Activated B cell treated with CpG ODN at 0.5 μM for 24 hours (primary cell): ENCODE measurements at regions of chr2 and their contacts with region 1.

Region 1: GRCh38 chr2:207166039-207166348 is 246 bp upstream of the KLF7 start:
- DNase-seq: peak; percentile 88
- ATAC-seq: peak; percentile 89
- H3K4me3 Mint-ChIP-seq: peak overlapping the region; percentile 95
- H3K27ac Mint-ChIP-seq: peak overlapping the region; percentile 95
- H3K4me1 Mint-ChIP-seq: peaks cover 63% of the 10 kb centered on the region
- H3K27me3 Mint-ChIP-seq: no peaks in the 10 kb centered on the region
- CTCF ChIP-seq: no peak

Region 2: DNA sequence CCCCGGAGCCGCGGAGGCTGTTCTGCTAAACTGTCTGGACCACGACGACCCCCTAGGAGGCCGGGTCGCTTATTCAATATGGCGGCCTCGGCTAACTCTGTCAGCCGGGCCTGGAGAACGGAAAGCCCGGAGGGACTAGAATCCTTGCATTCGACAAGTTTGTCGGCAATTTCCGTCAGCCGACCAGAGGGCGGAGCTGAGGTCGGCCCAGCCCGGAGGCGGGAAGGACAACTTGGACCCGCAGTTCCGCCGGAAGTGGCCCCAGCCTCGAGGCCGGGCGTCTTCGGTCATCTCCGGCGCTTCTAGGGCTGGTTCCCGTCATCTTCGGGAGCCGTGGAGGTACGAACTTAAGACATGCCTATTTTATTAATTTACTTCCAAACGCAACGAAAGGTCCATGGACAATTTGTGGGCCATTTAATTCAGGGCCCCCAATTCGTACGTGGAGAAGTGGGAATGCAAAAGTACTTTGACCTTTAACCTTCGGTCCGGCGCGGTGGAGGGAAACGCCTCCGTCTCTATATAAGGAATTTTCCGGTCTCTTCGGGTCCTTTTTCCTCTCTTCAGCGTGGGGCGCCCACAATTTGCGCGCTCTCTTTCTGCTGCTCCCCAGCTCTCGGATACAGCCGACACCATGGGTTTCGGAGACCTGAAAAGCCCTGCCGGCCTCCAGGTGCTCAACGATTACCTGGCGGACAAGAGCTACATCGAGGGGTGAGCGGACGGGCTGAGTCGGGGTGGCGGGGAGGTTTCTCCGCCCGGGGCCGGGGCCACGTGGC is 1006.5 kb before region 1 on chr2 and contains the starts of genes EEF1B2 and NDUFS1:
- CTCF ChIA-PET with region 1: no interaction called
- POLR2A ChIA-PET with region 1: interaction called, 5 read pairs
- intact Hi-C with region 1: loop called (anchors 2 kb)
- DNase-seq: peak; percentile 90
- ATAC-seq: peak; percentile 88
- H3K4me3 Mint-ChIP-seq: peak within 1 kb of the TSS; percentile 99
- H3K27ac Mint-ChIP-seq: peak within 1 kb of the TSS; percentile 97
- H3K4me1 Mint-ChIP-seq: peaks cover 56% of the 10 kb centered on the region
- H3K27me3 Mint-ChIP-seq: no peaks in the 10 kb centered on the region
- CTCF ChIP-seq: no peak
- total RNA-seq, gene EEF1B2: 1,278 and 1,486 TPM in 2 replicates
- total RNA-seq, gene NDUFS1: 47.3 and 50.1 TPM in 2 replicates

Region 3: GRCh38 chr2:207073801-207074678 is 92.0 kb before region 1 on chr2:
- CTCF ChIA-PET with region 1: no interaction called
- POLR2A ChIA-PET with region 1: interaction called, 4 read pairs
- intact Hi-C with region 1: loop called (anchors 5 kb)
- DNase-seq: no peak
- ATAC-seq: peak; percentile 11
- H3K4me3 Mint-ChIP-seq: peak overlapping the region; percentile 33
- H3K27ac Mint-ChIP-seq: no peak overlapping the region
- H3K4me1 Mint-ChIP-seq: peaks cover 34% of the 10 kb centered on the region
- H3K27me3 Mint-ChIP-seq: peaks cover 4% of the 10 kb centered on the region
- CTCF ChIP-seq: no peak

Region 4: GRCh38 chr2:207107551-207107950 is 58.4 kb before region 1 on chr2:
- CTCF ChIA-PET with region 1: no interaction called
- POLR2A ChIA-PET with region 1: no interaction called
- intact Hi-C with region 1: no loop called
- DNase-seq: no peak
- ATAC-seq: no peak
- H3K4me3 Mint-ChIP-seq: no peak overlapping the region
- H3K27ac Mint-ChIP-seq: no peak overlapping the region
- H3K4me1 Mint-ChIP-seq: peaks cover 20% of the 10 kb centered on the region
- H3K27me3 Mint-ChIP-seq: peaks cover 2% of the 10 kb centered on the region
- CTCF ChIP-seq: no peak

Region 5: DNA sequence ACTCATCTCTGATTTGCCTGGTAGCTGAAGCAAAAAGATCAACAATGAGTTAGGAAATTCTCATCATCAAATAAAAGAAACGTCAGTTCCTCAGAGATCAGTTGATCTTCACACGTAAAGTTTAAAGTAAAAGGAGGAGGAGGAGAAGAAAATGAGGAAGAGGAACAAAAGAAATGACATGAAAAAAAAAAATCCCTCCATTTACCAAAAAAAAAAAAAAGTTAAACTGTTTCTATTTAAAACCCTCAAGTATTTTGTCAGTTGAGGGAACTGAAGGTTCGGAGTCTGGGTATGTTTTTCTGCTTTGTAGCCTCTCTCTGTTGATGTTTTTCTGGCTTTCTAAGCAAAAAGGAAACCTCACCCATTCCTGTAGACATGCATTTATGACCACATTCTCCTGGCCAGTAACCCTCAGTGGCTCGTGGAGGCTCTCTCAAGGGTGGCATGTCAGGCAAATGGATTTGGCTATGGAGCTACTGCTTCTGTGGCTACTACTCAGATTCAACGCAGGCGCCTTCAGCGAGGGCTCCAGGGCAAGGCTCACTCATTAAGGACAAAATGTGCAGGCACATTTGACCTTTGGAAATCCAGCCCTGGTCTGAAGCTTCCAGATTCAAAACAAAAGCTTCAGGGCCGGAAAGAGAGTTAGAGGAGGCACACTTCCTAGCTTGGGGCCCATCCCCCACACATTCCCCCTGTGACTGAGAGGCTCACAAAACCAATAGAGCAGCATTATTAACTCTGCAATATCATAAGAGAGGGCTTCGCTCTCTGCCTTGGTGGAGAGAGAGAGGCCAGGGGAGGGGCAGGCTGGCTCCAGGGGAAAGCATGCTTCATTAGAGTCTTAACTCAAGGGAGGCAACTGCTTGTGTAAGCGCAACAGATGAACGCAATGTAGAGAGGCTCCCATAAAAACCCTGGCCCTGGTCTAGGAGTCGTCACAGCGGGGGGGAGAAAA is 22.5 kb before region 1 on chr2:
- CTCF ChIA-PET with region 1: interaction called, 11 read pairs
- POLR2A ChIA-PET with region 1: interaction called, 202 read pairs
- intact Hi-C with region 1: loop called (anchors 1 kb)
- DNase-seq: peak; percentile 34
- ATAC-seq: peak; percentile 65
- H3K4me3 Mint-ChIP-seq: peak overlapping the region; percentile 52
- H3K27ac Mint-ChIP-seq: peak overlapping the region; percentile 92
- H3K4me1 Mint-ChIP-seq: peaks cover 61% of the 10 kb centered on the region
- H3K27me3 Mint-ChIP-seq: no peaks in the 10 kb centered on the region
- CTCF ChIP-seq: no peak

Region 6: DNA sequence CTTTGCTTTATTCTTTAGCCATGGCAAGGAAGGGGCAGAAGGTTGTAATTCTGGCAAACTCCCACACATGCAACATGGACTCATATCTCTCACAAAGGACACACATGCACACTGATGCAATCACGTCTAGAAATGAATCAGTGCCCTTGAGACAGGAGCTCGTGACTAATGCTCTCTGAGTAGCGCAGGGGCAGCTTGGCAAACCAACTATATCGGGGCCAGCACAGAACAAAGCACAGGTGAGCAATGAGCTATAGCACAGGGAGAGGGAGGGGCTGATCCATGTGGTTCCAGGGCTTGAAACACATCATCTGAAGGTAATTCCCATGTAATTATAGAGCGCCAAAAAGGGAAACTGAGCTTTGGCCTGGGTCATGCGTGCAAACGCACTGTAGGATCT is 164.9 kb after region 1 on chr2:
- CTCF ChIA-PET with region 1: no interaction called
- POLR2A ChIA-PET with region 1: interaction called, 9 read pairs
- intact Hi-C with region 1: loop called (anchors 2 kb)
- DNase-seq: no peak
- ATAC-seq: peak; percentile 61
- H3K4me3 Mint-ChIP-seq: peak overlapping the region; percentile 4
- H3K27ac Mint-ChIP-seq: peak overlapping the region; percentile 68
- H3K4me1 Mint-ChIP-seq: peaks cover 53% of the 10 kb centered on the region
- H3K27me3 Mint-ChIP-seq: no peaks in the 10 kb centered on the region
- CTCF ChIP-seq: no peak

Region 7: DNA sequence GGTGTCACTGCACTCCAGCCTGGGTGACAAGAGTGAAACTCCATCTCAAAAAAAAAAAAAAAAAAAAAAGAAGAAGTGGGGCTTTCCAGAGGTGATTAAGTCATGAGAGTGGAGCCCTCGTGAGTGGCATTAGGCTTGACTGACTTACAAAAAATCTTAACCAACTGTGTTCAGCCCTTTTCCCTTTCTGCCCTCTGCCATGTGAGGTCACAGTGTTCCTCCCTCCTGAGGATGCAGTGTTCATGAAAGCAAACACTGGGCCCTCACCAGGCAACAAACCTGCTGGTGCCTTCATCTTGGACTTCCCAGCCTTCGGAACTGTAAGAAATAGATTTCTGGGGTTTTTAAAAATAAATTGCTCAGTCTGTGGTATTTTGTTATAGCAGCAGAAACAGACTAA is 496.2 kb after region 1 on chr2:
- CTCF ChIA-PET with region 1: interaction called, 3 read pairs
- POLR2A ChIA-PET with region 1: no interaction called
- intact Hi-C with region 1: loop called (anchors 1 kb)
- DNase-seq: peak; percentile 33
- ATAC-seq: peak; percentile 97
- H3K4me3 Mint-ChIP-seq: peak overlapping the region; percentile 78
- H3K27ac Mint-ChIP-seq: peak overlapping the region; percentile 97
- H3K4me1 Mint-ChIP-seq: peaks cover 59% of the 10 kb centered on the region
- H3K27me3 Mint-ChIP-seq: no peaks in the 10 kb centered on the region
- CTCF ChIP-seq: no peak

Region 8: DNA sequence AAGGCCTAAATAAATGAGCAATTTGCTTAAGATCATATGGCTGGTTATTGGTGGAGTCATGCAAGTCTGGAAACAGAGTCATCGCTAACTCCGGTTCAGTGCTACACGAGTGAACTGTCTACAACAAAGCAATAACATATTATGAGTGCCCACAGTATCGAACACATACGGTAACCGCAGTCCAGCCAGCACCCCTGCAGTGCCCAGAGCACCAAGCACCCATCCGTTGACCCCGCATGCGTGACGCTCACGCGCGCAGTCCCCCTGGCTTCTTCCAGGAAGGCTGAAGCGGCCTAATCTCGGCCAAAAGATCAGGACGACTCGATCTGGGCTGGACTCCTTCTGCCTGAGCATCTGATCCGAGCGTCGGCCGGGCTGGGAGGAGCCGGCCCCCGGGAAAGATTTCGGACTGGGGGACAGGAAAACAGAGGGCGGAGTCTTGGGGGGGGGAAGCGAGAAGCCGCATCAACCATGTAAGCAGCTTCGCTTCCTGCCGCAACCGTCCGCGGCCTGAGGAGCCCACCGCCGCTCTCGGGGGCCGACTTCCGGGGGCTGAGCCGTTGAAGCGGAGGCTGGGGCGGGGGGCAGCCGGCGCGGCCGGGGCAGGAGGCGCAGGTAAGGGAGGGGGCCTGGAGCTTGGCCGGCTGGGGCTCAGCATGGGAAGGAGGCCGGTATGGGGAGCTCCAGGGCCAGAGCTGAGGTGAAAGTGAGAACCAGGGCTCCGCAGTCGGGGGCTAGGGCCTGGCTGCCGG is 1100.0 kb after region 1 on chr2 and contains the start of gene PIKFYVE:
- CTCF ChIA-PET with region 1: no interaction called
- POLR2A ChIA-PET with region 1: interaction called, 3 read pairs
- intact Hi-C with region 1: loop called (anchors 5 kb)
- DNase-seq: peak; percentile 85
- ATAC-seq: peak; percentile 87
- H3K4me3 Mint-ChIP-seq: peak within 1 kb of the TSS; percentile 95
- H3K27ac Mint-ChIP-seq: peak within 1 kb of the TSS; percentile 95
- H3K4me1 Mint-ChIP-seq: peaks cover 56% of the 10 kb centered on the region
- H3K27me3 Mint-ChIP-seq: no peaks in the 10 kb centered on the region
- CTCF ChIP-seq: no peak
- total RNA-seq, gene PIKFYVE: 92.2 and 106 TPM in 2 replicates